Breast epithelium (tissue), 4 donors: ENCODE measurements at regions of chr3 and their contacts with region 1.

Region 1: GRCh38 chr3:154112146-154112852 is 8.9 kb upstream of the ARHGEF26 start:
- DNase-seq: no peak
- H3K4me3 ChIP-seq: no peak overlapping the region
- H3K27ac ChIP-seq: no peak overlapping the region
- H3K4me1 ChIP-seq: no peaks in the 10 kb centered on the region
- H3K27me3 ChIP-seq: no peaks in the 10 kb centered on the region
- CTCF ChIP-seq: no peak
- POLR2A ChIP-seq: no peak

Region 2: GRCh38 chr3:153595186-153595815 is 517.0 kb before region 1 on chr3:
- intact Hi-C with region 1: no loop called
- DNase-seq: no peak
- H3K4me3 ChIP-seq: no peak overlapping the region
- H3K27ac ChIP-seq: no peak overlapping the region
- H3K4me1 ChIP-seq: no peaks in the 10 kb centered on the region
- H3K27me3 ChIP-seq: no peaks in the 10 kb centered on the region
- CTCF ChIP-seq: peak in 2 of 3 donors; percentile 40
- POLR2A ChIP-seq: no peak

Region 3: GRCh38 chr3:154098376-154098775 is 13.9 kb before region 1 on chr3:
- intact Hi-C with region 1: loop called (anchors 2 kb)
- DNase-seq: no peak
- H3K4me3 ChIP-seq: no peak overlapping the region
- H3K27ac ChIP-seq: no peak overlapping the region
- H3K4me1 ChIP-seq: no peaks in the 10 kb centered on the region
- H3K27me3 ChIP-seq: no peaks in the 10 kb centered on the region
- CTCF ChIP-seq: no peak
- POLR2A ChIP-seq: no peak